A549 (cell line): ENCODE measurements at regions of chr3 and their contacts with region 1.

Region 1: DNA sequence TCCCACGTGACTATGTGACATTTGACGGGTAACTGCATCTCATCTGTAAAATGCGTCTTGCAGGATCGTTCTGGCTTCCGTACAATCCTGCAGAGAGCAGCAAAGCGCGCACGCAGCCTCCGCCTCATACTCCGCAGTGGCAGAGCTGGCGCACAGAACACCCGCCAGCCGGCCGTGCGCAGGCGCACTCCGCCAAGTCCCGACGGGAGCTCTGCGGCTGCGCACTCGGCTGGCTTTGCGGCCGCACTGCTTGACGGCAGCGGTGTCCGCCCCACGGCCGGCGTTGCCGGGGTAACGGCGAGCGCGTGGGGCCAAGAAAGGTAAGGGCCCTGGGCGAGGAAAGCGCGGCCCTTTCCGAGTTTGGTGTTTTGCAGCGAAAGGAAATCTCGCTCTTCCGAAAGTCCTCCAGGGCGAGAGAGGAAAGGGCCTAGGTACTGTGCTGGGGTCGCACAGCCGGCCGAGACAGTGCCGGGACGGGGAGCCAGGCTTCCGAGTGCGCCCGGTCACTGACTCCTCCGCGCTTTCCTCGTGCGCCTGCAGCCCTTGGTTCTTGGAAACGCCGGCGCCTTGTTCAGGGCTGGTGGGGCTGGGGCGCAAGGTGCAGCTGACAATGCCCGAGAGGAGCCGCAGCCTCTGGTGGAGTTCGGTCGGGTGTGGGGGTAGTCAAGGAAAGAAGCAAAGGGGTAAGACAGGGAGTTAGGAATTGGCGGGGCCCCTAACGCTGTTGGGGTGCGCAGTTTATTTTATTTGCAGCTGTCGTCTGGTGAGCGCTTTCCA is at the start of gene TSEN2:
- DNase-seq: peak; percentile 92 to 95
- ATAC-seq: peak; percentile 87 to 96
- H3K4me3 ChIP-seq: peak within 1 kb of the TSS; percentile 81
- H3K27ac ChIP-seq: peak within 1 kb of the TSS; percentile 88 to 93
- H3K4me1 ChIP-seq: peaks cover 25% of the 10 kb centered on the region
- CTCF ChIP-seq: no peak
- EP300 ChIP-seq: no peak
- POLR2A ChIP-seq: peak; percentile 95
- RAD21 ChIP-seq: peak in 1 of 2 experiments; percentile 22; a peak in 1 of 5 replicates
- polyA plus RNA-seq, gene TSEN2: 29.8 and 33.1 TPM in 2 replicates

Region 2: GRCh38 chr3:12135029-12135657 is 349.2 kb before region 1 on chr3:
- CTCF ChIA-PET with region 1: interaction called, 342 read pairs
- POLR2A ChIA-PET with region 1: interaction called, 3 read pairs
- DNase-seq: peak; percentile 64 to 66
- ATAC-seq: peak; percentile 96
- H3K4me3 ChIP-seq: no peak overlapping the region
- H3K27ac ChIP-seq: peak overlapping the region; percentile 0 to 39; a peak in 3 of 6 replicates
- H3K4me1 ChIP-seq: no peaks in the 10 kb centered on the region
- CTCF ChIP-seq: peak; percentile 95
- EP300 ChIP-seq: no peak
- POLR2A ChIP-seq: no peak
- RAD21 ChIP-seq: peak; percentile 98

Region 3: GRCh38 chr3:12193485-12194165 is 290.8 kb before region 1 on chr3:
- CTCF ChIA-PET with region 1: interaction called, 15 read pairs
- POLR2A ChIA-PET with region 1: interaction called, 3 read pairs
- DNase-seq: peak; percentile 77 to 90
- ATAC-seq: peak; percentile 84 to 86
- H3K4me3 ChIP-seq: peak overlapping the region; percentile 10; the same call in 1 of the 3 replicates
- H3K27ac ChIP-seq: peak overlapping the region; percentile 90 to 94
- H3K4me1 ChIP-seq: peaks cover 59% of the 10 kb centered on the region
- CTCF ChIP-seq: no peak
- EP300 ChIP-seq: peak; percentile 60 to 72; a peak in 3 of 5 replicates
- POLR2A ChIP-seq: no peak
- RAD21 ChIP-seq: peak in 1 of 2 experiments; percentile 49; a peak in 2 of 5 replicates

Region 4: GRCh38 chr3:12345584-12346494 is 138.5 kb before region 1 on chr3:
- CTCF ChIA-PET with region 1: interaction called, 10 read pairs
- POLR2A ChIA-PET with region 1: no interaction called
- DNase-seq: no peak
- ATAC-seq: no peak
- H3K4me3 ChIP-seq: no peak overlapping the region
- H3K27ac ChIP-seq: peak overlapping the region; percentile 11 to 71; a peak in 3 of 6 replicates
- H3K4me1 ChIP-seq: peaks cover 57% of the 10 kb centered on the region
- CTCF ChIP-seq: no peak
- EP300 ChIP-seq: no peak
- POLR2A ChIP-seq: no peak
- RAD21 ChIP-seq: no peak

Region 5: DNA sequence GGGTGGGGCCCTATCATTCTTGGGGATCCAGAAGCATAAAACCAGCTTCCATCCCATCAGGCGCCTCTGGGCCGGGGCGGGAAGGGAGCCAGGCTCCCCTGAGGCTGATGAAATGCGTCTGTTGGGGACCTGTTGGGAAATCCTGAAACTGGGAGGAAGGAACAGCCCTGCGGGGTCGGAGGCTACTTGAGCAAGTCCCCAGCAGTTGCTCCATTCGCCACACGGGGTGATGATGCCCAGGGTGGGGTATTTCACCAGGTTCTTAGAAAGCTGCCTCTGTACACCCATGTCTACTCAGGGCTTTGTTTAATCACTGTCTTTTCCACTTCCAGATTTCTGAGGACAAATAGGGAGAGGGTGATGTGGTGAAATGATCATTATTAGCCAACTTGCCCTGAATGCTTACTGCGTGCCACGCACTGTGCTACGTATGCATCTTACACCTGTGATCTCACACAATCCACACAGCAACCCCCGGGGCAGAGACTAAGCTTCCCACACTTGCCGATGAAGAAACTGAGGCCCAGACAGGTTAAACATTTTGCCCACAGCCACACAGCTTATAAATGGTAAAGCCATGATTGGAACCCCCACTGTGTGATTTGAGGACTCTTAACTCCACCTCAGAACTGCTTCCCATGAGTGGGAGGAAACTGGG is 25.4 kb before region 1 on chr3:
- CTCF ChIA-PET with region 1: interaction called, 14 read pairs
- POLR2A ChIA-PET with region 1: interaction called, 3 read pairs
- DNase-seq: peak in 1 of 2 experiments; percentile 26
- ATAC-seq: peak in 1 of 2 experiments; percentile 73; a peak in 3 of 6 replicates
- H3K4me3 ChIP-seq: no peak overlapping the region
- H3K27ac ChIP-seq: no peak overlapping the region
- H3K4me1 ChIP-seq: peaks cover 10% of the 10 kb centered on the region
- CTCF ChIP-seq: no peak
- EP300 ChIP-seq: no peak
- POLR2A ChIP-seq: no peak
- RAD21 ChIP-seq: no peak

Region 6: GRCh38 chr3:12495749-12496452 is 11.5 kb after region 1 on chr3:
- CTCF ChIA-PET with region 1: interaction called, 11 read pairs
- POLR2A ChIA-PET with region 1: interaction called, 7 read pairs
- DNase-seq: no peak
- ATAC-seq: peak in 1 of 2 experiments; percentile 61; a peak in 3 of 6 replicates
- H3K4me3 ChIP-seq: no peak overlapping the region
- H3K27ac ChIP-seq: no peak overlapping the region
- H3K4me1 ChIP-seq: no peaks in the 10 kb centered on the region
- CTCF ChIP-seq: 0 out of 3 replicates have a peak, but pooled peaks have one; percentile 17
- EP300 ChIP-seq: no peak
- POLR2A ChIP-seq: no peak
- RAD21 ChIP-seq: no peak